Psoas muscle (tissue), 8 donors: ENCODE measurements at regions of chr15 and their contacts with region 1.

Region 1: DNA sequence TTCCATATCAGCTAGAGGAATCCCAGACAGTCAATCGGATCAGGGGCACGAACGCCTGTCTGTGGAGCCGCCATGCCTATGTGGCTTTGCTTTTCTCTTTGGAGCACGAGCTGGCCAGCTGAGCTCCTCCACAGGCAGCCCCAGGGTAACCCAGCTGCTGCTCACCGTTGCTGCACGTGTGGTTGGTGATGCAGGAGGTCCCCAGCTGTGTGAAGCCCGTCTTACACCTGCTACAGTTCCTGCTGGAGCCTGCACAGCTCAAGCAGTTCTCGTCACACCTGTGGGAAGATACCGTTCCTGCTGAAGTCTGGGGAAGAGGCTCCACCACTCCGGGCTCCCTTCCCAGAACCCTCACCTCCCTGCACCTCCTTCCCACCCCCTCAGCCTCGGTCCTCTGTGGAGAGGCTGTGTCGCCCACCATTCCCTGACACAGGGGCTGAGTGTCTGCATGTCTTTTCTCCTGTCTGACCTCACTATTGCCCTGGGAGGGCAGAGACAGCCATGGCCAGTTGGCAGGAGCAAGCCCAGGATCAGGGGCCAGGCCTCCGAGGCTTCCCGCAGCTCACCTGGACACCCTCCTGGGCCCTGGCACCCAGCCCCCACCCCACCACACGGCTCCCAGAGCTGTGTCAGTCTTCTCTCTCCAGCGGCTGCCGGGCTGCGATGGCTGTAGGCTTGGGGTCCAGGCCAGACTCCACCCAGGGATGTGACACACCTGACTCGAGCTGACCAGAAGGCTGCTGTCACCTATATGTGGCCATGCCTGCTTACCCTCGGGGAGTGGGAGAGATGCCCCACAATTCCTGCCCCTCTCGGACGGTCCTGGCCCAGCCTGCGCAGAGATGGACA is 12.2 kb upstream of the SNRPA1 start:
- DNase-seq: no peak
- ATAC-seq: no peak
- H3K4me3 ChIP-seq: no peak overlapping the region
- H3K27ac ChIP-seq: no peak overlapping the region
- H3K4me1 ChIP-seq: no peaks in the 10 kb centered on the region
- H3K27me3 ChIP-seq: peaks cover 0 to 1% (median 0%) of the 10 kb centered on the region in 3 donors
- CTCF ChIP-seq: no peak

Region 2: DNA sequence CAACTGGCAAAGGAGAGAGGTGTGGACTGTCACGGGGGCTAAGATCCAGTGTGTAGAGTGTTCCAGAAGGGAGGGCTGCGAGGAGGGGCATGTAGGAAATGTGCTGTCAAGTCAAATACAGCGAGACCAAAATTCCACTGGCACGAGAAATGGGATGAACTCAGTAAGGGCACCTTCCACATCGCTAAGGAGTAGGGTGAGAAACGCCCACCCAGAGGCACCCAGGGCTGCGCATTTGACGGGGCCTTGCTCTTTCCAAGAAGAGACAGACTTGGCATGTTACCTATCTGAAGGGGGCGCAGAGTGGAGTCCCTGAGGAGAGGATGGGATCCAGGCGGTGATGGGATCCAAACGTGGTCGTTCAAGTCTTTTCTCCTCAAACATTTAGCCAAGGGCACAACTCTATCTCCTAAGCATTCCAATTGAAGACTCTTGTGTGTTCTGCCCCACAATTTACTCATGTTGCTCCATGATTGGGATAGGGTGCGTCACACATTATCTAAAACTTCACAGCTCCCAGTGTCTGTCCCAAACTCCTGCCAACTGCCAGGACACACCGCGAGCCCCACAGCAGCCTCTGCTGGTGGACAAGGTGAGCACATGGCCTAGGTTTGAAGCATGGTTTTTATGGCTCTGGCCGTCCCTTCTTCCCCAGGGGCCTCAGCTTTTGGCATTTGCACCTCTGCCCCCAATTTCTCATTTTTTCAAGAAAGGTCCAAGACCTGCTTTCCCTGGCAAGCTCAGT is 37.6 kb before region 1 on chr15:
- intact Hi-C with region 1: no loop called
- DNase-seq: no peak
- ATAC-seq: peak in 3 of 4 donors; percentile 30 to 37 (median 32)
- H3K4me3 ChIP-seq: no peak overlapping the region
- H3K27ac ChIP-seq: no peak overlapping the region
- H3K4me1 ChIP-seq: peaks cover 20% of the 10 kb centered on the region
- H3K27me3 ChIP-seq: no peaks in the 10 kb centered on the region
- CTCF ChIP-seq: peak; percentile 19

Region 3: DNA sequence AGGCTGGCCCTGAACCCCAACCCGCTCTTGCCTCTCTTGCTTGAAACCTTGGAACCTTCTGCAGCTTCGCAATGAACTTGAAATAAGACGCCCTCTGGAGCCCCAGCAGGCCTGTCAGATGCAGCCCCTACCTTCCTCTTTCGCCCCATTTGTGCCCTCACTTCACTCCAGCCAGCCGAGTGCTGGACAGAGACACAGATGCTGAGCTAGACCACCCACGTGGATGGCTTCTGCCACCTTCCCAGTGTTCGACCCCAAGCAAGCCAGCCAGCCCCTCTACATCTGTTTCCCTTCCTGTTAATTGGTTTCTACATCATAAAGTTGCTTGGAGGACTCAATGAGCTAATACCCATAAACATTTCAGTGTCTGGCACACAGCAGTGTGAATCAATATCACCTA is 11.6 kb after region 1 on chr15:
- intact Hi-C with region 1: loop called in 1 of 2 experiments (anchors 1 kb)
- DNase-seq: no peak
- ATAC-seq: no peak
- H3K4me3 ChIP-seq: no peak overlapping the region
- H3K27ac ChIP-seq: no peak overlapping the region
- H3K4me1 ChIP-seq: no peaks in the 10 kb centered on the region
- H3K27me3 ChIP-seq: no peaks in the 10 kb centered on the region
- CTCF ChIP-seq: no peak

Region 4: GRCh38 chr15:101372149-101372577 is 64.9 kb after region 1 on chr15:
- intact Hi-C with region 1: loop called in 1 of 2 experiments (anchors 10 kb)
- DNase-seq: peak in 1 of 2 donors; percentile 49
- ATAC-seq: no peak
- H3K4me3 ChIP-seq: no peak overlapping the region
- H3K27ac ChIP-seq: no peak overlapping the region
- H3K4me1 ChIP-seq: no peaks in the 10 kb centered on the region
- H3K27me3 ChIP-seq: no peaks in the 10 kb centered on the region
- CTCF ChIP-seq: no peak

Region 5: DNA sequence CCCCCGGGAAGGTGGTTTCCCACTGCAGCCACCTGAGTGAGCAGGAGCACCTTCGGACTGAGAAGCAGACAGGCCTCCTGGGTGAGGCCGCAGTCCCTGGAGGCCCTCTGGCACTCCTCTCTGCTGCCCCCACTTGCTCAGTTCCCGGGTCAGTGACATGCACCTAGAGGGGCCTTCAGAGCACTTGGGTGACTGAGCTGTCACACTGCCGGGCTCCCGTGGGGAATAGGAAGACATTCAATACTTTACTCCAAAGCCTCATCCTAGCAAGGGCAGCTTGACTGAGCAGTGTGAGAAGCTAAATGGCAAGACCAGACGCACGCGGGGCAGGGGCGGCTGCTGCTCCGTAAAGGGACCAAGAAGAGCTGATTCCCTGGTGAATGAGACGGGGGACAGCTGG is 119.6 kb after region 1 on chr15:
- intact Hi-C with region 1: loop called in 1 of 2 experiments (anchors 10 kb)
- DNase-seq: no peak
- ATAC-seq: peak in 1 of 4 donors; percentile 15
- H3K4me3 ChIP-seq: no peak overlapping the region
- H3K27ac ChIP-seq: no peak overlapping the region
- H3K4me1 ChIP-seq: no peaks in the 10 kb centered on the region
- H3K27me3 ChIP-seq: no peaks in the 10 kb centered on the region
- CTCF ChIP-seq: no peak

Region 6: DNA sequence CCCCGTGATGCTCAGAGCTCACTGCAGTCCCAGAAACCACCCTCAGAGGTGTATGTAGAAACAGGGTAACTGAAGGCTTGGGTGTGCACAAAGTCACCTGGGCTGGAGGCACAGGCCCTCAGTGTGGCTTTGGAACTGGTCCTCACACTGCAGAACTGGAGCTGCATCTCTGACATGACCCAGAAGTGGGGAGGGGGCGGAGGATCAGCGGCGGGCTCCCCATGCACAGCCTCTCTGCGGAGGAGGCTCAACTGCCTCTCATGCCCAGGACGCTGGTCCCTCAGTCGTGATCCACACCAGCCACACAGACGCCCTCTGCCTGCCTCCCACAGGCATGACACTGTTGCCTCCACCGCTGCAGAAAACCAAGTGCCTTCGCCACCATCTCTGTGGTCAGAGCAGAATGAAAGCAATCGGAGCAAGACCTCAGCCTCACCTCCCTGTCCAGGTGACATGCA is 271.2 kb after region 1 on chr15:
- intact Hi-C with region 1: loop called in 1 of 2 experiments (anchors 5 kb)
- DNase-seq: peak in 1 of 2 donors; percentile 40
- ATAC-seq: peak in 3 of 4 donors; percentile 78 to 84 (median 82)
- H3K4me3 ChIP-seq: no peak overlapping the region
- H3K27ac ChIP-seq: no peak overlapping the region
- H3K4me1 ChIP-seq: no peaks in the 10 kb centered on the region
- H3K27me3 ChIP-seq: peaks cover 0 to 5% (median 3%) of the 10 kb centered on the region in 3 donors
- CTCF ChIP-seq: peak; percentile 51

Region 7: GRCh38 chr15:101646672-101647071 is 339.4 kb after region 1 on chr15:
- intact Hi-C with region 1: loop called (anchors 2 to 5 kb)
- DNase-seq: peak in 1 of 2 donors; percentile 73
- ATAC-seq: peak; percentile 78 to 87 (median 84)
- H3K4me3 ChIP-seq: no peak overlapping the region
- H3K27ac ChIP-seq: peak overlapping the region; percentile 48
- H3K4me1 ChIP-seq: peaks cover 45% of the 10 kb centered on the region
- H3K27me3 ChIP-seq: no peaks in the 10 kb centered on the region
- CTCF ChIP-seq: no peak

Region 8: GRCh38 chr15:101652098-101652782 is 345.0 kb after region 1 on chr15 and contains the start of gene TM2D3:
- intact Hi-C with region 1: loop called (anchors 2 to 5 kb)
- DNase-seq: peak; percentile 96 to 97
- ATAC-seq: peak; percentile 94 to 95 (median 94)
- H3K4me3 ChIP-seq: peak within 1 kb of the TSS; percentile 76
- H3K27ac ChIP-seq: peak within 1 kb of the TSS; percentile 95
- H3K4me1 ChIP-seq: peaks cover 31% of the 10 kb centered on the region
- H3K27me3 ChIP-seq: no peaks in the 10 kb centered on the region
- CTCF ChIP-seq: peak; percentile 81
- total RNA-seq, gene TM2D3: 34.8 to 46.9 (median 41.3) TPM